CD4-positive, alpha-beta memory T cell (primary cell): ENCODE measurements at regions of chr7 and their contacts with region 1.

Region 1: DNA sequence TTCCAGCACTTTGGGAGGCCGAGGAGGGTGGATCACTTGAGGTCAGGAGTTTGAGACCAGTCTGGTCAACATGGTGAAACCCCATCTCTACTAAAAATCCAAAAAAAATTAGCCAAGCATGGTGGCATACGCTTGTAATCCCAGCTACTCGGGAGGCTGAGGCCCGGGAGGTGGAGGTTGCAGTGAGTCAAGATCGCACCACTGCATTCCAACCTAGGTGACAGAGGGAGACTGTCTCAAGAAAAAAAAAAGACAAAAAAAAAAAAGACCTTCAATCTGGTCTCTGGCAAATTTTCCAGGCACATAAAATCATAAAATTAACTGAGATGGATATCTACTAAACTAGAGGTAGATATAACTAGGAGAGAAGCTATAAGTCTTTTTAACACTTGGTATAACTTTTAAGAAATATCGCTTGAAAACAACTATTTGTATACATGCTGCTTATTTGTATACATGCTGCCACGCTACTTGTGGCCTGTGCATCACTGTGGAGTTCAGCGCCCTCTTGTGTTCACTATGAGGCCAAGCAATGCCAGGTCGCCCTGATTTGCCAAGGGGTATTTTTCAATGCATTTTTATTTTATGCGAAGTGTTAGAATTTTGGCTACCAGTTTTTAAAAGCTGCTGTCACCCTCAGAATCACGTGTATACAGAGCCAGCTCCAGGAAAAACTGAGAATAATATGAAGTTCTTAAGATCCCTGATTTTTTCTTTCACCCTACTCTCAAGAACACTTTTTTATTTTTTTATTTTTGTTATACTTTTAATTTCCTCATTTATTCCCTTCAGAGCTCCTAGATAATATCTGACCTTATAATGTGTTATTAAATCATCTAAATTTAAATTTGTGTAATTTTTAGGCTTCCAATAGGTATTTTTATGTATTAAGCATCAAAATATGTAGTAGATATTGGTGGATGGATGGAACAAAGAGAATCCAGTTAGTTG is 26.7 kb downstream of the CYCS start:
- DNase-seq: peak; percentile 50 to 65 (median 62)
- H3K4me3 ChIP-seq: no peak overlapping the region
- H3K4me3 Mint-ChIP-seq: no peak overlapping the region
- H3K27ac ChIP-seq: no peak overlapping the region
- H3K27ac Mint-ChIP-seq: no peak overlapping the region
- H3K4me1 ChIP-seq: peaks cover 3% of the 10 kb centered on the region
- H3K4me1 Mint-ChIP-seq: peaks cover 6 to 10% (median 7%) of the 10 kb centered on the region in 4 donors
- H3K27me3 ChIP-seq: no peaks in the 10 kb centered on the region
- H3K27me3 Mint-ChIP-seq: peaks cover 0 to 3% of the 10 kb centered on the region in 2 donors

Region 2: GRCh38 chr7:24390376-24391157 is 707.8 kb before region 1 on chr7:
- CTCF ChIA-PET with region 1: no interaction called
- POLR2A ChIA-PET with region 1: no interaction called
- intact Hi-C with region 1: no loop called
- DNase-seq: no peak
- H3K4me3 ChIP-seq: no peak overlapping the region
- H3K4me3 Mint-ChIP-seq: no peak overlapping the region
- H3K27ac ChIP-seq: no peak overlapping the region
- H3K27ac Mint-ChIP-seq: no peak overlapping the region
- H3K4me1 ChIP-seq: no peaks in the 10 kb centered on the region
- H3K4me1 Mint-ChIP-seq: no peaks in the 10 kb centered on the region
- H3K27me3 ChIP-seq: no peaks in the 10 kb centered on the region
- H3K27me3 Mint-ChIP-seq: peaks cover 2 to 5% of the 10 kb centered on the region in 2 donors

Region 3: GRCh38 chr7:24401628-24402593 is 696.5 kb before region 1 on chr7:
- CTCF ChIA-PET with region 1: no interaction called
- POLR2A ChIA-PET with region 1: no interaction called
- intact Hi-C with region 1: loop called (anchors 5 kb)
- DNase-seq: peak in 4 of 5 donors; percentile 8 to 17 (median 12)
- H3K4me3 ChIP-seq: no peak overlapping the region
- H3K4me3 Mint-ChIP-seq: peak overlapping the region in 1 of 8 donors; percentile 26
- H3K27ac ChIP-seq: no peak overlapping the region
- H3K27ac Mint-ChIP-seq: no peak overlapping the region
- H3K4me1 ChIP-seq: peaks cover 9% of the 10 kb centered on the region
- H3K4me1 Mint-ChIP-seq: peaks cover 7 to 11% (median 8%) of the 10 kb centered on the region in 4 donors
- H3K27me3 ChIP-seq: no peaks in the 10 kb centered on the region
- H3K27me3 Mint-ChIP-seq: peaks cover 0 to 6% of the 10 kb centered on the region in 2 donors

Region 4: DNA sequence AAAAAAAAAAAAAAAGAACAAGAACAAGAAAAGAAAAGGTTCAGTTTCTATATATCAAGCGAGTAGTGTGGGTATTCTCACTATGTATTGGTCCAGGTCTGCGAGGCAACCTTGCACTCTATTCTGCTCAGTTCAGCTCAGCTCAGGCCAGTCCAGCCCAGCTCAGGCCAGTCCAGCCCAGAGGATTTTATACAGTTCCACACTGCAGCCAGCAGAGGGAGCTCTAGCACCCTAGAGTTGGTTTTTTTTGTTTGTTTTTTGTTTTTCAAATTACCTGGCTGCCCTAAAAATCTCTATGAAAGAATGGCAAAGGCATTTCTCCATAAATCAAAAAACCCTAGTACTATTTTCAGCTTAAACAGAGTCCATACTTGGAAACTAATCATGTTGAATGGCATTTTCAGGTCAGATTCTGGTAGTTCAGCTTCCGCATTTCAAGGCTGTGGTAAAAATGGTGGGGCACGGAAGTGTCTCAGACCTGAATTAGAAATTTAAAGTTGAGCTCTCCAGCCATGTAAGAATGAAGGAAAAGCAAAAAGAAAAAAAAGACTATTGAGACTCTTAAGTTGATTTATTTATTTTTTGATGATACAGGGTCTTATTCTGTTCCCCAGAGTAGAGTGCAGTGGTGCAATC is 285.9 kb before region 1 on chr7:
- CTCF ChIA-PET with region 1: interaction called, 414 read pairs
- POLR2A ChIA-PET with region 1: interaction called, 8 read pairs
- intact Hi-C with region 1: loop called (anchors 1 kb)
- DNase-seq: peak; percentile 25 to 49 (median 38)
- H3K4me3 ChIP-seq: no peak overlapping the region
- H3K4me3 Mint-ChIP-seq: no peak overlapping the region
- H3K27ac ChIP-seq: no peak overlapping the region
- H3K27ac Mint-ChIP-seq: peak overlapping the region in 2 of 7 donors; percentile 22 to 23
- H3K4me1 ChIP-seq: no peaks in the 10 kb centered on the region
- H3K4me1 Mint-ChIP-seq: peaks cover 0 to 3% (median under 1%) of the 10 kb centered on the region in 4 donors
- H3K27me3 ChIP-seq: no peaks in the 10 kb centered on the region
- H3K27me3 Mint-ChIP-seq: no peaks in the 10 kb centered on the region

Region 5: DNA sequence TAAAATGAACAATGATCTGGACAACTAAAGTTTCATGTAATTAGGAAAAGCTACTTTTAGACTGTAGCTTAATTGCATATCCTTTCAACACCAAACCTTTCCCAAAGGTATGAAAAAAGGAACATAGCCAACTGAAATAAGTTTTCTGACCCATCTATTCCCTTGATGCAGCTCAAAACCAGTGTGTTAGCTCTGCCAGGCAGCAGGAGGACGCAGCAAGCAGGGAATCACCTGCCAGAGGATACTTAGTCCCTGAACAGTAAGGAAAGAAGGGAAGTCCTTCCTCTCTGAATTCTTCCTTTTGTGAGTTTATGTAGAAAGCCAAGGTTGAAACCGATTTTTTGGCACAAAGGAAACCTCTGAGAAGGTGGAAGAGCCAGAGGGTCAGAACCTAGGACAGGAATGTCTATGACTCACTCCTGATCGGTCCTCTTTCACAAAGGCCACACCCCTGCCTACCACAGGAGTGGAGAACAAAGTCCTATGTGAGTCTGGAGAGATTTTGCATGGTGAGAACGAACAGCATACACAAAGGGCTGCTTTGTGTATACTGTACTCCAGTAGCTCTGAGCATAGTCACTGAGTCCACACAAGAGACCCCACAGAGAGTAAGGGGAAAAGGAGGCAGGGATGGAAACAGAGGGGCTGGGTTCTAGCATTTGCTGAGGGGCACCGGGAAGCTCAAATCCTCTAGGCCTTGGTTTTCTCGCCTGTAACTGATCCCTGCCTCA is 272.3 kb before region 1 on chr7:
- CTCF ChIA-PET with region 1: interaction called, 80 read pairs
- POLR2A ChIA-PET with region 1: interaction called, 31 read pairs
- intact Hi-C with region 1: no loop called
- DNase-seq: no peak
- H3K4me3 ChIP-seq: peak overlapping the region in 1 of 2 donors; percentile 21
- H3K4me3 Mint-ChIP-seq: peak overlapping the region in 7 of 8 donors; percentile 56 to 89 (median 76)
- H3K27ac ChIP-seq: peak overlapping the region; percentile 45
- H3K27ac Mint-ChIP-seq: peak overlapping the region; percentile 87 to 96 (median 91)
- H3K4me1 ChIP-seq: peaks cover 62% of the 10 kb centered on the region
- H3K4me1 Mint-ChIP-seq: peaks cover 51 to 72% (median 65%) of the 10 kb centered on the region in 4 donors
- H3K27me3 ChIP-seq: no peaks in the 10 kb centered on the region
- H3K27me3 Mint-ChIP-seq: no peaks in the 10 kb centered on the region

Region 6: GRCh38 chr7:24939416-24939815 is 159.0 kb before region 1 on chr7:
- CTCF ChIA-PET with region 1: no interaction called
- POLR2A ChIA-PET with region 1: no interaction called
- intact Hi-C with region 1: no loop called
- DNase-seq: no peak
- H3K4me3 ChIP-seq: no peak overlapping the region
- H3K4me3 Mint-ChIP-seq: no peak overlapping the region
- H3K27ac ChIP-seq: no peak overlapping the region
- H3K27ac Mint-ChIP-seq: no peak overlapping the region
- H3K4me1 ChIP-seq: peaks cover 19% of the 10 kb centered on the region
- H3K4me1 Mint-ChIP-seq: peaks cover 47 to 76% (median 66%) of the 10 kb centered on the region in 4 donors
- H3K27me3 ChIP-seq: no peaks in the 10 kb centered on the region
- H3K27me3 Mint-ChIP-seq: no peaks in the 10 kb centered on the region

Region 7: GRCh38 chr7:25069900-25070443 is 28.4 kb before region 1 on chr7:
- CTCF ChIA-PET with region 1: interaction called, 33 read pairs
- POLR2A ChIA-PET with region 1: no interaction called
- intact Hi-C with region 1: no loop called
- DNase-seq: peak; percentile 43 to 57 (median 54)
- H3K4me3 ChIP-seq: no peak overlapping the region
- H3K4me3 Mint-ChIP-seq: no peak overlapping the region
- H3K27ac ChIP-seq: no peak overlapping the region
- H3K27ac Mint-ChIP-seq: peak overlapping the region in 2 of 7 donors; percentile 44 to 51
- H3K4me1 ChIP-seq: peaks cover 5% of the 10 kb centered on the region
- H3K4me1 Mint-ChIP-seq: peaks cover 0 to 7% (median 4%) of the 10 kb centered on the region in 4 donors
- H3K27me3 ChIP-seq: no peaks in the 10 kb centered on the region
- H3K27me3 Mint-ChIP-seq: no peaks in the 10 kb centered on the region

Region 8: GRCh38 chr7:25125137-25125946 is 27.0 kb after region 1 on chr7 and contains the start of gene CYCS:
- CTCF ChIA-PET with region 1: interaction called, 18 read pairs
- POLR2A ChIA-PET with region 1: interaction called, 3 read pairs
- intact Hi-C with region 1: loop called (anchors 1 kb)
- DNase-seq: peak; percentile 99 to 100 (median 99)
- H3K4me3 ChIP-seq: peak within 1 kb of the TSS; percentile 72 to 82
- H3K4me3 Mint-ChIP-seq: peak within 1 kb of the TSS; percentile 97 to 100 (median 100)
- H3K27ac ChIP-seq: peak within 1 kb of the TSS; percentile 97
- H3K27ac Mint-ChIP-seq: peak within 1 kb of the TSS; percentile 96 to 100 (median 100)
- H3K4me1 ChIP-seq: peaks cover 9% of the 10 kb centered on the region
- H3K4me1 Mint-ChIP-seq: peaks cover 14 to 26% (median 15%) of the 10 kb centered on the region in 4 donors
- H3K27me3 ChIP-seq: no peaks in the 10 kb centered on the region
- H3K27me3 Mint-ChIP-seq: no peaks in the 10 kb centered on the region
- total RNA-seq, gene CYCS: 46.9 to 54.2 TPM

Region 9: DNA sequence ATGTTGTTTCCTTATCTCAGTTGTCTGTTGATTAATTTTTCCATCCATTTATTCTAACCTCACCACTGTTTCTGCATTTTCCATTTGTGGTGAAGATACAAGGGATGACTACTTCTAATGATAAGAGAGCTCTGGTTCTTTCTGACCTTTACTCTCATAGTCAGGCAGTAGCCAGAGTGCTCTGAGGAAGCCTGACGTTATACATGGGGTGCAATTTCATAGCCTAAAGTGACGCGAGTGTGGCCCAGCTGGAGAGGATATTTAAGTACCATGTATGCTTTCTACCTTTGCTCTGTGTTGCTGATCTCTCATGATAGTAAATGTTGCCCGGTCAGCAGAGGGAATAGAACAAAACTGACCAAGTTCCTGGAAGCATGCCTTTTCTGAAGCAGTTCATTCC is 60.6 kb after region 1 on chr7:
- CTCF ChIA-PET with region 1: interaction called, 10 read pairs
- POLR2A ChIA-PET with region 1: no interaction called
- intact Hi-C with region 1: loop called (anchors 5 kb)
- DNase-seq: no peak
- H3K4me3 ChIP-seq: no peak overlapping the region
- H3K4me3 Mint-ChIP-seq: no peak overlapping the region
- H3K27ac ChIP-seq: no peak overlapping the region
- H3K27ac Mint-ChIP-seq: no peak overlapping the region
- H3K4me1 ChIP-seq: no peaks in the 10 kb centered on the region
- H3K4me1 Mint-ChIP-seq: peaks cover 0 to 4% (median 2%) of the 10 kb centered on the region in 4 donors
- H3K27me3 ChIP-seq: no peaks in the 10 kb centered on the region
- H3K27me3 Mint-ChIP-seq: no peaks in the 10 kb centered on the region

Region 10: GRCh38 chr7:25187932-25188331 is 89.6 kb after region 1 on chr7:
- CTCF ChIA-PET with region 1: no interaction called
- POLR2A ChIA-PET with region 1: no interaction called
- intact Hi-C with region 1: no loop called
- DNase-seq: no peak
- H3K4me3 ChIP-seq: no peak overlapping the region
- H3K4me3 Mint-ChIP-seq: no peak overlapping the region
- H3K27ac ChIP-seq: no peak overlapping the region
- H3K27ac Mint-ChIP-seq: peak overlapping the region in 1 of 7 donors; percentile 42
- H3K4me1 ChIP-seq: no peaks in the 10 kb centered on the region
- H3K4me1 Mint-ChIP-seq: no peaks in the 10 kb centered on the region
- H3K27me3 ChIP-seq: no peaks in the 10 kb centered on the region
- H3K27me3 Mint-ChIP-seq: peaks cover 13 to 16% of the 10 kb centered on the region in 2 donors